ENCODE measurements at regions of chr15 and their contacts with region 1.

Region 1: GRCh38 chr15:34914317-34914716 is 55.2 kb downstream of the AQR start:
- DNase-seq: no peak
- H3K4me3 ChIP-seq: no peak overlapping the region
- H3K27ac ChIP-seq: no peak overlapping the region
- H3K27me3 ChIP-seq: no peaks in the 10 kb centered on the region
- CTCF ChIP-seq: no peak

Region 2: GRCh38 chr15:34621675-34622074 is 292.6 kb before region 1 on chr15:
- intact Hi-C with region 1: loop called (anchors 5 to 10 kb)
- DNase-seq: no peak
- H3K4me3 ChIP-seq: no peak overlapping the region
- H3K27ac ChIP-seq: no peak overlapping the region
- H3K27me3 ChIP-seq: peaks cover 0 to 10% (median 0%) of the 10 kb centered on the region in 45 donors
- CTCF ChIP-seq: peak in 51 of 56 donors; percentile 20 to 72 (median 49)

Measured in dorsolateral prefrontal cortex (tissue), 120 donors.